Natural killer cell (primary cell): ENCODE measurements at regions of chr3 and their contacts with region 1.

Region 1: GRCh38 chr3:110314512-110315114 is 757.0 kb upstream of the NECTIN3 start:
- DNase-seq: peak; percentile 19 to 77
- ATAC-seq: peak; percentile 68 to 77 (median 72)
- H3K4me3 ChIP-seq: no peak overlapping the region
- H3K4me3 Mint-ChIP-seq: no peak overlapping the region
- H3K27ac ChIP-seq: no peak overlapping the region
- H3K27ac Mint-ChIP-seq: no peak overlapping the region
- H3K4me1 ChIP-seq: no peaks in the 10 kb centered on the region
- H3K4me1 Mint-ChIP-seq: no peaks in the 10 kb centered on the region
- H3K27me3 ChIP-seq: no peaks in the 10 kb centered on the region
- H3K27me3 Mint-ChIP-seq: no peaks in the 10 kb centered on the region
- CTCF ChIP-seq: peak; percentile 83

Region 2: GRCh38 chr3:109532257-109533216 is 782.1 kb before region 1 on chr3:
- intact Hi-C with region 1: loop called (anchors 1 kb)
- DNase-seq: peak in 1 of 2 donors; percentile 65
- ATAC-seq: peak in 1 of 3 donors; percentile 53
- H3K4me3 ChIP-seq: no peak overlapping the region
- H3K4me3 Mint-ChIP-seq: no peak overlapping the region
- H3K27ac ChIP-seq: no peak overlapping the region
- H3K27ac Mint-ChIP-seq: no peak overlapping the region
- H3K4me1 ChIP-seq: no peaks in the 10 kb centered on the region
- H3K4me1 Mint-ChIP-seq: no peaks in the 10 kb centered on the region
- H3K27me3 ChIP-seq: no peaks in the 10 kb centered on the region
- H3K27me3 Mint-ChIP-seq: no peaks in the 10 kb centered on the region
- CTCF ChIP-seq: no peak

Region 3: DNA sequence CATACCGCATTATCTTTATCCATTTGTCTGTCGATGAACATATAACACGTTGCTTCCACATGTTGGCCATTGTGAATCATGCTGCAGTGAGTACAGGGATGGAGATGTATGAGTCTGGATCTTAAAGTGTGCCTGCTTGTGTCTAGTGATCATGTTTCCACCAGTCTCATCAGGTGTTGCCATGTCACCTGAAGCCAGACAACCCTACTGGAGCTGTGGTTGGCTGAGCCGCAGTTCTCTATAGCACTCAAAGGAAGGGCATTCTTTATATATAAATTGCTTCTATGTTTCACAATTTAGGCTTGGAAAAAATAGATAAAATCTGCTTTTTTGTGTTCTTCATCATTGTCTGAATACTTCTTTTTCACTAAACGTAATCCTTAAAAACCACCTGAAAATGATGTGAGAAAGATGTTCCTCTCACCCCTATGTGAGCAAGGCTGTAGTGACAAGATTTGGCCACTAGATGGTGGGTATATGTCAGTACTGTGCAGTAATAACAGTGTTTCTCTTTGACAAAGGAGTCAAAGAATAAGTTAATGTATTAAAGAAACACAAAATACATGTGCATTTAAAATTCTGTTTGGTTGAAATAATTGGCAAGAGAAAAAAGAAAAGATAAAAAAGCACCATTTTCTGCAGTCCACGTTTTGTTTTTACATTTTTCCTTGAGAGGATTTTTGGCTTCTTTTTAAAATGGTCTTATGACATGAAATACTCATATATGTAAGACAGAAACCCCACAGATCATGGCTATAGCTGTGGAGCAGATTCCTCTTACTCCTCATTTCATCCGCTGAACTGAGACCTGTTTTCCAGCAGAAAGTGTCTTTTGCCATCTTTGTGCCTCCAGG is 582.8 kb before region 1 on chr3:
- intact Hi-C with region 1: loop called (anchors 1 kb)
- DNase-seq: peak; percentile 22 to 82
- ATAC-seq: peak; percentile 83 to 95 (median 88)
- H3K4me3 ChIP-seq: no peak overlapping the region
- H3K4me3 Mint-ChIP-seq: no peak overlapping the region
- H3K27ac ChIP-seq: no peak overlapping the region
- H3K27ac Mint-ChIP-seq: no peak overlapping the region
- H3K4me1 ChIP-seq: no peaks in the 10 kb centered on the region
- H3K4me1 Mint-ChIP-seq: peaks cover 0 to 10% of the 10 kb centered on the region in 2 donors
- H3K27me3 ChIP-seq: no peaks in the 10 kb centered on the region
- H3K27me3 Mint-ChIP-seq: no peaks in the 10 kb centered on the region
- CTCF ChIP-seq: peak; percentile 96

Region 4: DNA sequence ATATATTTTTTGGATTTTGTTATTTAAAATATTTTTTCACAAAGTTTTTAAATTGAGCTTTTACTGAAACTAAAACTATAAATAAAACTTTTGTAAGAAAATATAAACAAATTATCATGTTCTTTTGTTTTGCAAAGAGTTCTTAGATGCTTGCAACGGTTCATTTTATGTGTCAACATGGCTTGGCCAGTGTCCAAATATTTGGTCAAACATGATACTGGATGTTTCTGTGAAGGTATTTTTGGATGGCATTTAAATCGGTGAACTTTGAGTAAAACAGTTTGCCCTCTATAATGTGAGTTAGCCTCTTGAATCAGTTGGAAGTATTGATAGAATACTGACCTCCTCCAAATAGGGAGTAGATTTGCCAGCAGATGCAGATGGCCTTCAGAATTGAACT is 144.4 kb after region 1 on chr3:
- intact Hi-C with region 1: no loop called
- DNase-seq: no peak
- ATAC-seq: no peak
- H3K4me3 ChIP-seq: no peak overlapping the region
- H3K4me3 Mint-ChIP-seq: no peak overlapping the region
- H3K27ac ChIP-seq: no peak overlapping the region
- H3K27ac Mint-ChIP-seq: no peak overlapping the region
- H3K4me1 ChIP-seq: no peaks in the 10 kb centered on the region
- H3K4me1 Mint-ChIP-seq: no peaks in the 10 kb centered on the region
- H3K27me3 ChIP-seq: no peaks in the 10 kb centered on the region
- H3K27me3 Mint-ChIP-seq: no peaks in the 10 kb centered on the region
- CTCF ChIP-seq: no peak

Region 5: GRCh38 chr3:111481551-111481950 is 1166.9 kb after region 1 on chr3:
- intact Hi-C with region 1: no loop called
- DNase-seq: no peak
- ATAC-seq: no peak
- H3K4me3 ChIP-seq: no peak overlapping the region
- H3K4me3 Mint-ChIP-seq: no peak overlapping the region
- H3K27ac ChIP-seq: no peak overlapping the region
- H3K27ac Mint-ChIP-seq: no peak overlapping the region
- H3K4me1 ChIP-seq: no peaks in the 10 kb centered on the region
- H3K4me1 Mint-ChIP-seq: no peaks in the 10 kb centered on the region
- H3K27me3 ChIP-seq: no peaks in the 10 kb centered on the region
- H3K27me3 Mint-ChIP-seq: peaks cover 12% of the 10 kb centered on the region in 2 donors
- CTCF ChIP-seq: no peak